GM12878 (cell line): ENCODE measurements at regions of chr3 and their contacts with region 1.

Region 1: GRCh38 chr3:194261581-194262063 is 89.5 kb downstream of the CPN2 start:
- DNase-seq: no peak
- ATAC-seq: no peak
- H3K4me3 ChIP-seq: no peak overlapping the region
- H3K27ac ChIP-seq: no peak overlapping the region
- H3K4me1 ChIP-seq: no peaks in the 10 kb centered on the region
- H3K27me3 ChIP-seq: no peaks in the 10 kb centered on the region; a peak in 1 of 4 replicates
- CTCF ChIP-seq: no peak
- EP300 ChIP-seq: no peak
- POLR2A ChIP-seq: no peak
- RAD21 ChIP-seq: no peak

Region 2: DNA sequence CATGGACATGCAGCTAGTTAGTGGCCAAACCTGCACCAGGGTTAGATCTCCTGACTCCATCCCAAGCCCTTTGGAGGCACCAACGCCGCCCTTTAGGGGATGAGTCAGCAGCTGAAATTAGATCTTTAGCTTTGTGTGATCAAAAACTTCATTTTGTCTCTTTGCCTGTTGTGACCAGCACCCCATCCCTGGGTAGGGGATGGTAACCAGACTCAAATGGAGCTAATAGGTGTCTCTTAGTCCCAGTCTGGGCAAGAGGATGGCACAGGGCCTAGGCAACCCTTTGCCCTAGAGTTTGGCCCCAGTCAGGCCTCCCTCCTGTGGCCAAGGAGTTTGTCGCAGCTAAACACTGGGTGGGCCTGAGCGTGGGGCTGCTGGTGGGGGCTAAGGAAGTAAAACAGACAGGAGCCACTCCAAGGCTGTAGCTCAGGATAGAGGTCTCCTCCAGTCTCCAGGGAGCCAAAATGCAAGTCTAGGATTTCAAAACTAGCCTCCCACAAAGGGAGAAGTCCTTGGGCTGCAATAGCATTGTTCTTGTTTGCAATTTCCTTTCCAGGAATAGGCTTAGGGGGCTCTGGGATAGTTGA is 15.6 kb before region 1 on chr3:
- CTCF ChIA-PET with region 1: no interaction called
- POLR2A ChIA-PET with region 1: no interaction called
- RAD21 ChIA-PET with region 1: no interaction called
- SMC1A ChIA-PET with region 1: no interaction called
- in situ Hi-C with region 1: no loop called
- intact Hi-C with region 1: loop called (anchors 1 kb)
- DNase-seq: no peak
- ATAC-seq: no peak; the same call in 2 of the 3 replicates
- H3K4me3 ChIP-seq: no peak overlapping the region
- H3K27ac ChIP-seq: no peak overlapping the region
- H3K4me1 ChIP-seq: no peaks in the 10 kb centered on the region
- H3K27me3 ChIP-seq: peaks cover 10 to 14% of the 10 kb centered on the region in 2 experiments; a peak in 3 of 4 replicates
- CTCF ChIP-seq: no peak
- EP300 ChIP-seq: no peak
- POLR2A ChIP-seq: no peak
- RAD21 ChIP-seq: no peak